CD4-positive, alpha-beta memory T cell (primary cell): ENCODE measurements at regions of chr12 and their contacts with region 1.

Region 1: GRCh38 chr12:47307680-47308399 is 228.1 kb upstream of the AMIGO2 start:
- DNase-seq: peak; percentile 64 to 72 (median 66)
- H3K4me3 ChIP-seq: peak overlapping the region; percentile 78 to 82
- H3K4me3 Mint-ChIP-seq: peak overlapping the region; percentile 89 to 99 (median 94)
- H3K27ac ChIP-seq: peak overlapping the region; percentile 51
- H3K27ac Mint-ChIP-seq: peak overlapping the region; percentile 82 to 95 (median 93)
- H3K4me1 ChIP-seq: peaks cover 13% of the 10 kb centered on the region
- H3K4me1 Mint-ChIP-seq: peaks cover 21 to 43% (median 32%) of the 10 kb centered on the region in 4 donors
- H3K27me3 ChIP-seq: no peaks in the 10 kb centered on the region
- H3K27me3 Mint-ChIP-seq: no peaks in the 10 kb centered on the region

Region 2: GRCh38 chr12:46752396-46752795 is 555.4 kb before region 1 on chr12:
- CTCF ChIA-PET with region 1: no interaction called
- POLR2A ChIA-PET with region 1: no interaction called
- intact Hi-C with region 1: no loop called
- DNase-seq: peak in 3 of 5 donors; percentile 1 to 13 (median 2)
- H3K4me3 ChIP-seq: no peak overlapping the region
- H3K4me3 Mint-ChIP-seq: peak overlapping the region in 3 of 8 donors; percentile 0 to 57 (median 17)
- H3K27ac ChIP-seq: no peak overlapping the region
- H3K27ac Mint-ChIP-seq: peak overlapping the region in 2 of 7 donors; percentile 2 to 10
- H3K4me1 ChIP-seq: peaks cover 12% of the 10 kb centered on the region
- H3K4me1 Mint-ChIP-seq: peaks cover 11 to 23% (median 16%) of the 10 kb centered on the region in 4 donors
- H3K27me3 ChIP-seq: no peaks in the 10 kb centered on the region
- H3K27me3 Mint-ChIP-seq: no peaks in the 10 kb centered on the region

Region 3: GRCh38 chr12:47190271-47190750 is 117.5 kb before region 1 on chr12:
- CTCF ChIA-PET with region 1: interaction called, 22 read pairs
- POLR2A ChIA-PET with region 1: interaction called, 24 read pairs
- intact Hi-C with region 1: loop called (anchors 5 kb)
- DNase-seq: no peak
- H3K4me3 ChIP-seq: no peak overlapping the region
- H3K4me3 Mint-ChIP-seq: peak overlapping the region in 7 of 8 donors; percentile 8 to 93 (median 69)
- H3K27ac ChIP-seq: peak overlapping the region; percentile 42
- H3K27ac Mint-ChIP-seq: peak overlapping the region; percentile 62 to 95 (median 93)
- H3K4me1 ChIP-seq: peaks cover 80% of the 10 kb centered on the region
- H3K4me1 Mint-ChIP-seq: peaks cover 67 to 90% (median 78%) of the 10 kb centered on the region in 4 donors
- H3K27me3 ChIP-seq: no peaks in the 10 kb centered on the region
- H3K27me3 Mint-ChIP-seq: no peaks in the 10 kb centered on the region

Region 4: GRCh38 chr12:47223031-47223847 is 84.6 kb before region 1 on chr12:
- CTCF ChIA-PET with region 1: interaction called, 25 read pairs
- POLR2A ChIA-PET with region 1: interaction called, 41 read pairs
- intact Hi-C with region 1: no loop called
- DNase-seq: peak in 1 of 5 donors; percentile 27
- H3K4me3 ChIP-seq: peak overlapping the region in 1 of 2 donors; percentile 29
- H3K4me3 Mint-ChIP-seq: peak overlapping the region; percentile 75 to 87 (median 83)
- H3K27ac ChIP-seq: peak overlapping the region; percentile 56
- H3K27ac Mint-ChIP-seq: peak overlapping the region; percentile 78 to 97 (median 93)
- H3K4me1 ChIP-seq: peaks cover 96% of the 10 kb centered on the region
- H3K4me1 Mint-ChIP-seq: peaks cover 55 to 80% (median 68%) of the 10 kb centered on the region in 4 donors
- H3K27me3 ChIP-seq: no peaks in the 10 kb centered on the region
- H3K27me3 Mint-ChIP-seq: no peaks in the 10 kb centered on the region

Region 5: GRCh38 chr12:47296828-47297227 is 11.0 kb before region 1 on chr12:
- CTCF ChIA-PET with region 1: interaction called, 10 read pairs
- POLR2A ChIA-PET with region 1: interaction called, 8 read pairs
- intact Hi-C with region 1: no loop called
- DNase-seq: no peak
- H3K4me3 ChIP-seq: no peak overlapping the region
- H3K4me3 Mint-ChIP-seq: no peak overlapping the region
- H3K27ac ChIP-seq: no peak overlapping the region
- H3K27ac Mint-ChIP-seq: peak overlapping the region in 1 of 7 donors; percentile 18
- H3K4me1 ChIP-seq: peaks cover 31% of the 10 kb centered on the region
- H3K4me1 Mint-ChIP-seq: peaks cover 20 to 47% (median 27%) of the 10 kb centered on the region in 4 donors
- H3K27me3 ChIP-seq: no peaks in the 10 kb centered on the region
- H3K27me3 Mint-ChIP-seq: no peaks in the 10 kb centered on the region

Region 6: GRCh38 chr12:47408171-47408871 is 100.5 kb after region 1 on chr12:
- CTCF ChIA-PET with region 1: interaction called, 6 read pairs
- POLR2A ChIA-PET with region 1: interaction called, 8 read pairs
- intact Hi-C with region 1: loop called (anchors 1 kb)
- DNase-seq: peak; percentile 39 to 48 (median 44)
- H3K4me3 ChIP-seq: peak overlapping the region in 1 of 2 donors; percentile 24
- H3K4me3 Mint-ChIP-seq: peak overlapping the region in 5 of 8 donors; percentile 12 to 48 (median 39)
- H3K27ac ChIP-seq: no peak overlapping the region
- H3K27ac Mint-ChIP-seq: peak overlapping the region in 4 of 7 donors; percentile 1 to 58 (median 33)
- H3K4me1 ChIP-seq: peaks cover 44% of the 10 kb centered on the region
- H3K4me1 Mint-ChIP-seq: peaks cover 41 to 74% (median 50%) of the 10 kb centered on the region in 4 donors
- H3K27me3 ChIP-seq: no peaks in the 10 kb centered on the region
- H3K27me3 Mint-ChIP-seq: no peaks in the 10 kb centered on the region

Region 7: DNA sequence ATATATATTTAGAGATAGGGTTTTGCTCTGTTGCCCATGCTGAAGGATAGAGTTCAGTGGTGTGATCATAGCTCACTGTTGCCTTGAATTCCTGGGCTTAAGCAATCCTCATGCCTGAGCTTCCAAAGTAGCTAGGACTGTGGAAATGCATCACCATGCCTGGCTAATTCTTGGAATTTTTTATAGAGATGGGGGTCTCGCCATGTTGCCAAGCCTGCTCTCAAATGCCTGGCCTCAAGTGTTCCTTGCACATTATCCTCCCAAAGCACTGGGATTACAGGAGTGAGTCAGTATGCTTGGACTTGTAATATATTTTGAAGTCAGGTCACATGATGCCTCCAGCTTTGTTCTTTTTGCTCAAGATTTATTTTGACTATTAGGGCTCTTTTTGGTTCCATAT is 220.0 kb after region 1 on chr12:
- CTCF ChIA-PET with region 1: no interaction called
- POLR2A ChIA-PET with region 1: no interaction called
- intact Hi-C with region 1: no loop called
- DNase-seq: no peak
- H3K4me3 ChIP-seq: no peak overlapping the region
- H3K4me3 Mint-ChIP-seq: no peak overlapping the region
- H3K27ac ChIP-seq: no peak overlapping the region
- H3K27ac Mint-ChIP-seq: no peak overlapping the region
- H3K4me1 ChIP-seq: no peaks in the 10 kb centered on the region
- H3K4me1 Mint-ChIP-seq: no peaks in the 10 kb centered on the region
- H3K27me3 ChIP-seq: peaks cover 4% of the 10 kb centered on the region
- H3K27me3 Mint-ChIP-seq: peaks cover 4 to 10% of the 10 kb centered on the region in 2 donors

Region 8: GRCh38 chr12:47779301-47779942 is 471.6 kb after region 1 on chr12:
- CTCF ChIA-PET with region 1: no interaction called
- POLR2A ChIA-PET with region 1: no interaction called
- intact Hi-C with region 1: no loop called
- DNase-seq: peak; percentile 84 to 87 (median 86)
- H3K4me3 ChIP-seq: no peak overlapping the region
- H3K4me3 Mint-ChIP-seq: peak overlapping the region in 1 of 8 donors; percentile 12
- H3K27ac ChIP-seq: no peak overlapping the region
- H3K27ac Mint-ChIP-seq: peak overlapping the region in 4 of 7 donors; percentile 3 to 83 (median 81)
- H3K4me1 ChIP-seq: peaks cover 7% of the 10 kb centered on the region
- H3K4me1 Mint-ChIP-seq: peaks cover 7 to 24% (median 12%) of the 10 kb centered on the region in 4 donors
- H3K27me3 ChIP-seq: no peaks in the 10 kb centered on the region
- H3K27me3 Mint-ChIP-seq: no peaks in the 10 kb centered on the region